Activated CD4-positive, alpha-beta T cell treated with anti-CD3 and anti-CD28 coated beads for 36 hours (primary cell): ENCODE measurements at regions of chr16 and their contacts with region 1.

Region 1: GRCh38 chr16:22694887-22695382 is 119.0 kb upstream of the HS3ST2 start:
- DNase-seq: no peak
- ATAC-seq: no peak
- H3K4me3 Mint-ChIP-seq: no peak overlapping the region
- H3K27ac Mint-ChIP-seq: no peak overlapping the region
- H3K4me1 Mint-ChIP-seq: no peaks in the 10 kb centered on the region
- H3K27me3 Mint-ChIP-seq: peaks cover 2% of the 10 kb centered on the region

Region 2: DNA sequence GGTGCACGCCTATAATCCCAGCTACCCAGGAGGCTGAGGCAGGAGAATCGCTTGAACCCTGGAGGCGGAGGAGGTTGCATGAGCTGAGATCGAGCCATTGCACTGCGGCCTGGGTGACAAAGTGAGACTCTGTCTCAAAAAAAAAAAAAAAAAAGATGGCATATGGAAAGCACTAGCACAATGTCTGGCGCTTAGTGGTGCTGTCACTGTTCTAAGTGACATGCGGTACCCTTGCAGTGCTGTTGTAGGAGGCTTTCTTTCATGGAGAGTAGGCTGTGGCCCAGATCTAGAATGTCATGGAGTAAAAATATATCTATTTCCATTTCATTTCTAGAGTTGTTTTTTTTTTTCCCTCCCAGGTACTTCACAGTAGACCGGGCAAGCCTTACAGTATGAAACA is 1110.1 kb before region 1 on chr16:
- CTCF ChIA-PET with region 1: interaction called, 6 read pairs
- POLR2A ChIA-PET with region 1: no interaction called
- intact Hi-C with region 1: loop called in 1 of 2 experiments (anchors 1 kb)
- DNase-seq: no peak
- ATAC-seq: no peak
- H3K4me3 Mint-ChIP-seq: no peak overlapping the region
- H3K27ac Mint-ChIP-seq: no peak overlapping the region
- H3K4me1 Mint-ChIP-seq: no peaks in the 10 kb centered on the region
- H3K27me3 Mint-ChIP-seq: no peaks in the 10 kb centered on the region

Region 3: GRCh38 chr16:22250522-22250921 is 444.4 kb before region 1 on chr16:
- CTCF ChIA-PET with region 1: no interaction called
- POLR2A ChIA-PET with region 1: no interaction called
- intact Hi-C with region 1: no loop called
- DNase-seq: no peak
- ATAC-seq: no peak
- H3K4me3 Mint-ChIP-seq: no peak overlapping the region
- H3K27ac Mint-ChIP-seq: no peak overlapping the region
- H3K4me1 Mint-ChIP-seq: no peaks in the 10 kb centered on the region
- H3K27me3 Mint-ChIP-seq: no peaks in the 10 kb centered on the region

Region 4: DNA sequence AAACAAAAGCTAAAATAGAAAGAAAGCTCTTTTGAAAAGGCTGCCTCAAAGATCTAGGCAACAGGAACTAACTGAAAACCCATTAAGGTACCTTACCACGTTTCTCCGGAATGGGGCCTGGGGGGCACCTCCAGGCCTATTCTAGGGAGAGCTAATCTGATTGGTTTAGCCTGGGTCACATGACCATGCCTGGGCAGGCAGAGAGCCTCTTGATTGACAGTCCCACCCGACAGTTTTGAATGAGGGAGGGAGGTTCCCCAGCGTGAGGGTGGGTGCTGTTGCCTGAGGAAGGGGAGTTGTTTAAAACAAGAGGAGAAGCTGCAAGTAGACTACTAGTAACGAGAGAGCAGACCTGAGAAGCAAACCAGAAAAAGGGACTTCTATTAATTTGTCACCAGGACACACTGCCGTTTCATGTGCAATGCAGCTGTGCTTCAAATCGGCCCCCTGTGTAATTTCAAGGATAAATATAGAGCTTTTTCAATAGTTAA is 24.3 kb before region 1 on chr16:
- CTCF ChIA-PET with region 1: no interaction called
- POLR2A ChIA-PET with region 1: no interaction called
- intact Hi-C with region 1: loop called in 1 of 2 experiments (anchors 2 kb)
- DNase-seq: peak; percentile 41
- ATAC-seq: peak; percentile 51
- H3K4me3 Mint-ChIP-seq: no peak overlapping the region
- H3K27ac Mint-ChIP-seq: no peak overlapping the region
- H3K4me1 Mint-ChIP-seq: no peaks in the 10 kb centered on the region
- H3K27me3 Mint-ChIP-seq: no peaks in the 10 kb centered on the region

Region 5: DNA sequence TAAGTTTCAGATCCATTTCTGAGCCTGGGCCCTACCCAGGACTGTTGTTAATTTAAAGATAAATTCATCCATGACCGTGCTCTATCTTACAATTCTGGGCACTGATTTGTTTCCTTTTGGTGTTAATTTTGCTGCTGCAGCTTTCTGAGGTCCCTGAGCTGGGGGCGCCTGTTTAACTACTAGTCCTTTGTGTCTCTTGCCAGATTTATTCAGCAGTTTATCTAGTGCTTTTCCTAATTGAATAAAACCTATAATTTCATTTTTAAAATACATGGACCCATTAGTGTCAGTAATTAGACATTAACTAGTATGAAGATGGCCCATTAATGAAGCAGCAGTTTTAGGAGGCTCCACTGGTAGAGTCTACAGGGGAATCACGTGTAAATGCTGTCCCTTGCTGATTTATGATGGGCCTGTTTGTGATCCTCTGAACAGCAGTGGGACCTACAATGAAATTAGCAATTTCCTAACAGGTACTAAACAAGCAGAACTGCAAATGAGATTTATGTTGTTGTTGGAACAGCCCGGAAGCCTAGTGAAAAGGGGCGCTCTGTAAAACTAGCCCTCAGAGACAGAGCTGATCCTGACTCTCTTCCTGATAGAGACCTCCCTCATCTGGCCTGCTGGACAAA is 173.8 kb after region 1 on chr16:
- CTCF ChIA-PET with region 1: no interaction called
- POLR2A ChIA-PET with region 1: no interaction called
- intact Hi-C with region 1: no loop called
- DNase-seq: no peak
- ATAC-seq: no peak
- H3K4me3 Mint-ChIP-seq: no peak overlapping the region
- H3K27ac Mint-ChIP-seq: no peak overlapping the region
- H3K4me1 Mint-ChIP-seq: no peaks in the 10 kb centered on the region
- H3K27me3 Mint-ChIP-seq: peaks cover 9% of the 10 kb centered on the region